IMR-90 (cell line): ENCODE measurements at regions of chr3 and their contacts with region 1.

Region 1: DNA sequence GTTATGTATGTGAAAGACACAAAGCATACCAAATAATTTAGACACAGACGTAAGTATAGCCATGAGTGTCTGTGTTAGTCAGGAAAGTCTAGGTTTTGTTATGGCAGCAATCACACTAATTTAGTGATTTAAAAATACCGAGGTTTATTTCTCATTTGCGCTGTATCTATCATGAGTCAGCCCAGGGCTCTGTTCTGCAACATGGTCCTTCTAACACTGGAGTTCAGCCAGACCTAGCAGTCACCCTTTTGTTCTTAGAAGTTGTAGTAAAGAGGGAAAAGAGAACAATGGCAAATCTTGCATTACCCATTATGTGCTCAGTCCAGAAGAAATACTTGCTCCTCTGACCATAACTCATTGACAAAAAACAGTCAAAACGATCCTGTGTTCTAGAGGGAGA is 311.5 kb downstream of the NLGN1 start:
- DNase-seq: peak; percentile 39
- ATAC-seq: no peak
- H3K4me3 ChIP-seq: no peak overlapping the region
- H3K27ac ChIP-seq: no peak overlapping the region
- H3K4me1 ChIP-seq: no peaks in the 10 kb centered on the region
- H3K27me3 ChIP-seq: no peaks in the 10 kb centered on the region
- CTCF ChIP-seq: no peak
- POLR2A ChIP-seq: no peak
- RAD21 ChIP-seq: no peak

Region 2: DNA sequence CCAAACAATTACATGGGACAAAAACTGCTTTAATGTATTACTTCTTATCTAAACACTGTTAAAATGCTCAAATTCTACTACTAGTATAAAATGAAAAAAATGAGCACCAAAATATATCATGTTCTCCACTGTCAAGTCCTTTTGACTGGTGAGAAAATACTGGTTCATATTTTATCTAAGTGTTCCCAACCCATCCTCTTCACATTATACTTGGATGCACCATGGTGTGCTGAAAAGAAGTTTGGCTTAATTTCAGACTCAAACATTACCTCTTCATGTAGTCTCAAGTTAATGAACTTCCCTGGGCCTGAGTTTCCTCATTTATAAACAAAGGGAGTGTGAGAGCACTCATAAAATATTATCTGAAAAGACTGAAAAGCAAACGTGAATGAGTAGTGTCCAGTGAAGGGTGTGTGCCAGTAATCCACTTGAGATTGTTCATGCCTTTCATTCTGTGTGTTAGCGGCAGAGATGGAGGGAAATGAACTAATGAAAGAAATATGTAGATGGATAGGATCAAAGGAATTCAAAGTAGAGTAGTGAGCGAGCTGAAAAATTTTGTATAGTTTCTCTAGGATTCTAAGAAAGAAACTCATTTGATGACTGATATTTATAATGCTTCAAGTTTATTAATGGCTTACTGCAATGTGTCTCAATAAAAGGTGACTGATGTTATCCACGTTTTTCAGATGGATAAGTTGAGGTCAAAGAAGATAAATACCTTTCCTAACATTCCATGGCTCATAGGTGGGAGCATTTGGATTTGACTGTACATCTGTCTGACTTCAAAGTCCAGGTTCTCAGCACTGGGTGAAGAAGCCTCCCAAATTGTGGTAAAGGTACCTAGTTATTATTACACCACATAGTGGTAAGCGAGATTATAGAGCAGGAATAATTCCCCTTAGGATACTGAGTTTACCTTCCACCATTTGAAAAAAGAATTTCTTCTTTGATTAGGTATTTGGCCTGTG is 48.1 kb before region 1 on chr3:
- CTCF ChIA-PET with region 1: no interaction called
- POLR2A ChIA-PET with region 1: interaction called, 10 read pairs
- dilution Hi-C with region 1: no loop called
- in situ Hi-C with region 1: no loop called
- intact Hi-C with region 1: no loop called
- DNase-seq: peak; percentile 45
- ATAC-seq: peak; percentile 82
- H3K4me3 ChIP-seq: no peak overlapping the region
- H3K27ac ChIP-seq: no peak overlapping the region
- H3K4me1 ChIP-seq: no peaks in the 10 kb centered on the region
- H3K27me3 ChIP-seq: no peaks in the 10 kb centered on the region
- CTCF ChIP-seq: no peak
- POLR2A ChIP-seq: no peak
- RAD21 ChIP-seq: no peak